ENCODE measurements at regions of chr1 and their contacts with region 1.

Region 1: DNA sequence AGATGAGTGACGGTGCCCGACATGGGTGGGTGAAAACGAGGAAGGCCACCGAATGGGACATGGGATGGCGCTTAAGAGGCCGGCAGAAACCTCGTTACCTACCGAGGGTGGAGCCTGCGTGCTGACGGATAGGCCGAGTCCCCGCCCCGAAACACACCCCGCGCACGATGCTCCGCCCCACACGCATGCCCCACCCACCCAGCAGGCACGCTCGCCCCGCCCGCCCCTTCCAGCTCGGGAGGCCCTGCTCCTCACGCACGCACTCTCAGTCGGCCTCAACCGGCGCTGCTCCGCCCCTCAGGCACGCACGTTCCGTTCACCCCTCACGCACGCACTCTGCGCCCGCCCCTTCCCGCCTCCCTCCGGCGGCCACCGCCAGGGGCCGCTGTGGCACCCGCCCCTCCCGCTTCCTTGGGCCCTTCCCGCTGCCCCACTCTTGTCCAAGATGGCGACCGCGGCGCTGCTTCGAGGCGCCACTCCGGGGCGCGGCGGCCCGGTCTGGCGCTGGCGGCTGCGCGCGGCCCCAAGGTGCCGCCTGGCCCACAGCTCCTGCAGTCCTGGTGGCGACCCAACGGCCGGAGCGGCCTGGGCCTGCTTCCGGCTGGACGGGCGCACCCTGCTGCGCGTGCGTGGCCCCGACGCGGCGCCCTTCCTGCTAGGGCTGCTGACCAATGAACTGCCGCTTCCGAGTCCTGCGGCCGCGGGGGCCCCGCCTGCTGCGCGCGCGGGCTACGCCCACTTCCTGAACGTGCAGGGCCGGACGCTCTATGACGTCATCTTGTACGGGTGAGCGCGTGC is at the start of gene IBA57:
- DNase-seq: peak; percentile 99
- H3K4me3 Mint-ChIP-seq: peak within 1 kb of the TSS; percentile 85
- H3K27ac Mint-ChIP-seq: peak within 1 kb of the TSS; percentile 95
- H3K4me1 Mint-ChIP-seq: peaks cover 23% of the 10 kb centered on the region
- H3K27me3 Mint-ChIP-seq: no peaks in the 10 kb centered on the region
- total RNA-seq, gene IBA57: 7.6 and 7.9 TPM in 2 replicates

Region 2: DNA sequence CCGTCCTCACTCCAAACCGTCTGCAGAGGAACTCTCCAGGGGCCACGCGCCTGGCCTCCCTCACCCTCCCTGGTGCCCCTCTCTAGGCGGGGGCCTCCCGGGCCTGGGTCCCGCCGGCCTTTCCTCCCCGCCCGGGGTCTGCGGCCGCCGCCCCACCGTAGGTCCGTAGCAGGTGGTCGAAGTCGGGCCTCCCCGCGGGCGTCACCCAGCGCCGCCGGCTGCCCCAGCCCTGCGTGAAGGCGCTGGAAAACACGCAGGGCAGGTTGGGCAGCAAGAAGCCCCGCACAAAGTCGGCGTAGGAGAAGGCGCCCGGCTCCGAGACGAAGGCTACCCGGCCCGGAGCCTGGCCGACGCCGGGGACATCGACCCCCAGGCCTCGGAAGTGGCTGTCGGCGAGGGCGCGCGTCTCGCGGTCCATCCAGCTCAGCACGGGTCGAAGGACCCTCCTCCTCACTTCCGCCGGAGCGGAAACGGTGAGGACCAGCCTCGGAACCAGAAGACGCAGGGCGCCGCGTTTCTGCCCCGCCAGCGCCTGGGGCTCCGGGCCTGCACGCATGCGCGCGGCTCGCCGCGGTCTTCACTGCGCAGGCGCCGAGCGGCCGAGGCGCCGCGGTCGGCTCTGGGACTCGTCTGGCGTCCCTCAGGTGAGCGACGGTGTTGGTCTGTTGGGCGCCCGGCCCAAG is 430.6 kb before region 1 on chr1 and contains the starts of genes JMJD4 and SNAP47:
- intact Hi-C with region 1: loop called (anchors 10 kb)
- DNase-seq: peak; percentile 92
- H3K4me3 Mint-ChIP-seq: peak within 1 kb of the TSS; percentile 96
- H3K27ac Mint-ChIP-seq: peak within 1 kb of the TSS; percentile 93
- H3K4me1 Mint-ChIP-seq: peaks cover 23% of the 10 kb centered on the region
- H3K27me3 Mint-ChIP-seq: no peaks in the 10 kb centered on the region
- total RNA-seq, gene JMJD4: 26.6 and 27.5 TPM in 2 replicates
- total RNA-seq, gene SNAP47: 28.4 and 29.3 TPM in 2 replicates

Region 3: GRCh38 chr1:228082135-228082891 is 83.3 kb before region 1 on chr1 and contains the start of gene ARF1:
- intact Hi-C with region 1: loop called (anchors 1 kb)
- DNase-seq: peak; percentile 89
- H3K4me3 Mint-ChIP-seq: peak within 1 kb of the TSS; percentile 89
- H3K27ac Mint-ChIP-seq: peak within 1 kb of the TSS; percentile 92
- H3K4me1 Mint-ChIP-seq: peaks cover 42% of the 10 kb centered on the region
- H3K27me3 Mint-ChIP-seq: no peaks in the 10 kb centered on the region
- total RNA-seq, gene ARF1: 409 and 410 TPM in 2 replicates

Region 4: DNA sequence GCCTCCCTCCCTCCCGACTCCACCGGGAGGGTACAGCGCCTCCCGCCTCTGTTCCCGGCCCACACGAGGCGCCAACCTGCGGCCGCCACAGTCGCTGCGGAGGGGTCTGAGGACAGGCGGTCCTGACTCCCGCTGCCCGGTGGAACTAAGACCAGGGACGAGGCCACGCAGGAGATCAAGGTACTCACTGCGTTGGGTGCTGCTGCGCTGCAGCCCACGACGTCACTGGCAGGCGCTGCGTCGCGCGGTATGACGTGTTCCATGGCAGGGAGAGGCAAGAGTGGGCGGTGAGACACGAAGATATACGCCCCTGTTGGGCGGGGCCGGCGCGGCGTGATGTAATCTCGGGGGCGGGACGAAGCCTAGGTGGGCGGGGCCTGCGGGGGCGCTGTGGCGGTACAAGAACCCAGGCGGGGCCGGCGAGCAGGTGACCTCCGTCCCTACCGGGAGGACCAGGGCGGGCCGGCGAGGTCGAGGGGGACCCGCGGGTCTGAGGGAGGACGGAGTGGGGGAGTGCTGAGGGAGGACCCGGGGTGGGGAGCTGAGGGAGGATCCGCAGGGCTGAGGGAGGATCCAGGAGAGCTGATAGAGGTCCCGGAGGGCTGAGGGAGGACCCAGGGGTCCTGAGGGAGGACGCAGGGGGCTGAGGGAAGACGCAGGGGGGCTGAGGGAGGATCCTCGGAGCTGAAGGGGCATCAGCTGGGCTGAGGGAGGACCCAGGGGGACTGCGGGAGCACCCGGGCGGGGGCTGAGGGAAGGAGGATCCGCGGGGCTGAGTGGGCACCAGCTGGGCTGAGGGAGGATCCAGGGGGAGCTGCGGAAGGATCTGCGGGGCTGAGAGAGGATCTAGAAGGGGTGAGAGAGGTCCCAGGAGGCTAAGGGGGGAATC is 56.3 kb before region 1 on chr1 and contains the start of gene MRPL55:
- intact Hi-C with region 1: loop called (anchors 1 kb)
- DNase-seq: peak; percentile 98
- H3K4me3 Mint-ChIP-seq: peak within 1 kb of the TSS; percentile 82
- H3K27ac Mint-ChIP-seq: peak within 1 kb of the TSS; percentile 87
- H3K4me1 Mint-ChIP-seq: peaks cover 21% of the 10 kb centered on the region
- H3K27me3 Mint-ChIP-seq: no peaks in the 10 kb centered on the region
- total RNA-seq, gene MRPL55: 47.3 and 53.6 TPM in 2 replicates

Region 5: GRCh38 chr1:228212966-228213844 is 47.6 kb after region 1 on chr1:
- intact Hi-C with region 1: loop called (anchors 1 kb)
- DNase-seq: peak; percentile 82
- H3K4me3 Mint-ChIP-seq: peak overlapping the region; percentile 89
- H3K27ac Mint-ChIP-seq: peak overlapping the region; percentile 93
- H3K4me1 Mint-ChIP-seq: peaks cover 4% of the 10 kb centered on the region
- H3K27me3 Mint-ChIP-seq: no peaks in the 10 kb centered on the region

Region 6: GRCh38 chr1:228464487-228464983 is 299.0 kb after region 1 on chr1:
- intact Hi-C with region 1: loop called (anchors 1 kb)
- DNase-seq: peak; percentile 93
- H3K4me3 Mint-ChIP-seq: peak overlapping the region; percentile 82
- H3K27ac Mint-ChIP-seq: peak overlapping the region; percentile 87
- H3K4me1 Mint-ChIP-seq: peaks cover 58% of the 10 kb centered on the region
- H3K27me3 Mint-ChIP-seq: peaks cover 3% of the 10 kb centered on the region